H1 (cell line): ENCODE measurements at regions of chr2 and their contacts with region 1.

Region 1: DNA sequence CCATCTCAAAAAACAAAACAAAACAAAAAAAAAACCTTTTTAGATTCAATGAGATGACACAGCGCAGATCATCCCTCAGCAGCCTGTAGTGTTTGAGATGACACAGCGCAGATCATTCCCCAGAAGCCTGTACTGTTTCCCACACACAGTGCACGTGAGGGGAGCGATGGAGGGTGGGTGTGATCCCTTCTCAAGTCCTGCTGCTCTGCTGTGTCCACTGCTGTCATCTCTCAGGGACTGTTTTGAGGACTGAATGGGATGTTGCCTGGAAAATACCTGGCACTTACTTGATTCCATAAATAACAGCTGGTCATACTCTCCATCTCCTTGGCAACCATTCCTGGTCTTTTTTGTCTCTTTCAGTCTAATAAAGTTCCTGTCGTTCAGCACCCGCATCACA is 25.7 kb downstream of the TGOLN2 start:
- DNase-seq: no peak
- H3K4me3 ChIP-seq: no peak overlapping the region
- H3K27ac ChIP-seq: no peak overlapping the region
- H3K4me1 ChIP-seq: 0 out of 7 replicates have a peak, but pooled peaks cover 0 to 2% (median 0%) of the 10 kb centered on the region in 4 experiments
- H3K27me3 ChIP-seq: no peaks in the 10 kb centered on the region
- CTCF ChIP-seq: no peak
- EP300 ChIP-seq: no peak
- POLR2A ChIP-seq: no peak
- RAD21 ChIP-seq: no peak

Region 2: DNA sequence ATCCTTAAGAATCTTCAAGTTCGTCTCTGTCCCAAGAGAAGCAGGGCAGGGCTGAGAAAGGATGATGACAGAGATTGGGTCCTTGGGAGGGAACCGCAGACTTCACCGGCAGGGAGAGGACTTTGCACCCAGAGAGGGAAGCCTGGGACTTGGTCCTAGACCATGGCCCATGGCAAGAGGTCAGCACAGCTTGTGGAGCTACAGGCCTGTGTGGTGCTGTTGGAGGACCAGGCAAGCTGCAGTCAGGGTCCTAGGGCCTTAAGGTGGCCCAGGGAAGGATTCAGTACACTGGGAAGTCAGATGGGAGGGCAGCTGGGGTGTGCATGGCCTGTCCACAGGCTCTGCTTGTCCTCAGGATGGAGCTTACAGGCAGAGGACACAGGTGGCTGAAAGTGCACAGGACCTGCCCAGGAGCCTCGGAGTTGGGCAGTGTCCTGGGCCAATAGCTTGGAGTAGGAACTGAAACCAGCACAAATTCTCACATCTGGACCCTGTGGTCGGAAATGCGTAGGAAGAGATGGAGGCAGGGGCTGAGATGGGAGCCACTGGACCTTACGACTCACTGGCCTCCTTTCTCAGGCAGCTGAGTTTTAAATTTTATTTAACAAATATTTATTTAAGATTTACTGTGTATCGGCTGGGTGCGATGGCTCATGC is 225.4 kb before region 1 on chr2:
- CTCF ChIA-PET with region 1: interaction called, 18 read pairs
- POLR2A ChIA-PET with region 1: no interaction called
- DNase-seq: no peak
- H3K4me3 ChIP-seq: no peak overlapping the region
- H3K27ac ChIP-seq: no peak overlapping the region
- H3K4me1 ChIP-seq: no peaks in the 10 kb centered on the region; a peak in 1 of 7 replicates
- H3K27me3 ChIP-seq: no peaks in the 10 kb centered on the region; a peak in 2 of 7 replicates
- CTCF ChIP-seq: no peak
- EP300 ChIP-seq: no peak
- POLR2A ChIP-seq: no peak
- RAD21 ChIP-seq: no peak

Region 3: DNA sequence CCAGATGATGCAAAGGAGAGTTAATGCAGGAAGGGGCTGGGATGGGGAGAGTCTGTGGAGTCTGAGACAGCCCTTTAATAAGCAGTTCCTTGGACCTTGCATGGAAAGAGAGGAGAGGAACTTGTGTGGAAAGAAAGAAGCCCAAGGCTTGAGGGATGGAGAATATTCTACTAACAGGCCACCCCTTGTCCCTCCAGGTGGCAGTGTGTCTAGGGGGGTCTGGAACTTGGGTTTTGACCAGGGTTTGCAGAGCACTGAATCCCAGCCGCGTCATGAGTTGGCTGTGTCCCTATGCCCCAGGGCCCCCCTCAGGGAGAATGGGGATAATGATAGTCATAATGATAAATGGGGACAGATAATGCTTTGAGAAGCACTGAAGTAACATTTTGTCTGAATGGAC is 153.9 kb before region 1 on chr2:
- CTCF ChIA-PET with region 1: interaction called, 16 read pairs
- POLR2A ChIA-PET with region 1: interaction called, 5 read pairs
- DNase-seq: no peak
- H3K4me3 ChIP-seq: no peak overlapping the region
- H3K27ac ChIP-seq: no peak overlapping the region
- H3K4me1 ChIP-seq: peaks cover 0 to 7% (median 4%) of the 10 kb centered on the region in 4 experiments; a peak in 3 of 7 replicates
- H3K27me3 ChIP-seq: no peaks in the 10 kb centered on the region
- CTCF ChIP-seq: peak in 1 of 3 experiments; percentile 23; a peak in 1 of 4 replicates
- EP300 ChIP-seq: no peak
- POLR2A ChIP-seq: no peak
- RAD21 ChIP-seq: peak in 1 of 2 experiments; percentile 20; a peak in 1 of 4 replicates

Region 4: GRCh38 chr2:85288244-85288725 is 13.8 kb before region 1 on chr2:
- CTCF ChIA-PET with region 1: interaction called, 49 read pairs
- POLR2A ChIA-PET with region 1: no interaction called
- DNase-seq: no peak
- H3K4me3 ChIP-seq: no peak overlapping the region
- H3K27ac ChIP-seq: no peak overlapping the region
- H3K4me1 ChIP-seq: peaks cover 0 to 14% (median under 1%) of the 10 kb centered on the region in 4 experiments; a peak in 2 of 7 replicates
- H3K27me3 ChIP-seq: no peaks in the 10 kb centered on the region
- CTCF ChIP-seq: no peak
- EP300 ChIP-seq: no peak
- POLR2A ChIP-seq: no peak
- RAD21 ChIP-seq: no peak